Right ventricle myocardium superior (tissue), 1 donor: ENCODE measurements at regions of chr10 and their contacts with region 1.

Region 1: DNA sequence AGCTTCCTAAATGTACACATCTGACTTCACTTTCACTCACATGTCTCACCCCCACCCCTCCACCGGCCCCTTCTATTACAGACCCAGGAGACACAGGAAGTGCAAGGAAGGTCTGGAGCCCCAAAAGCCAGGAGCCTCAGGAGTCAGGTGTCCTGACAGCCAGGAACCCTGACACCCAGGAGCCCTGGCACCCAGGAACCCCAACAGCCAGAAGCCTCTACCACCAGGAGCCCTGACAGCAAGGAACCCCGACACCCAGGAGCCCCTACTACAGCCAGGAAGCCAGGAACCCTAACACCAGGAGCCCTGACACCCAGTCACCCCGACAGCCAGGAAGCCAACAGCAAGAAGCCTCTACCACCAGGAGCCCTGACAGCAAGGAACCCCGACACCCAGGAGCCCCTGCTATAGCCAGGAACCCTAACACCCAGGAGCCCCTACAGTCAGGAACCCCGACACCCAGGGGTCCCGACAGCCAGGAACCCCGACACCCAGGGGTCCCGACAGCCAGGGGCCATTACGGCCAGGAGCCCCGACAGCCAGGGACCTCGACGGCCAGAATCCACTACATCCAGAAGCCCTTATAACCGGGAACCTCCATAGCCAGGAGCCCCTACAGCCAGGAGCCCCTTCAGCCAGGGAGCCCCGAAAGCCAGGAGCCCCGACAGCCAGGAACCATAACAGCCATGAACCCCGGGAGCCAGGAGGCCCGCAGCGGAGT is 526 bp upstream of the GLRX3 start:
- DNase-seq: no peak
- ATAC-seq: peak; percentile 34

Region 2: DNA sequence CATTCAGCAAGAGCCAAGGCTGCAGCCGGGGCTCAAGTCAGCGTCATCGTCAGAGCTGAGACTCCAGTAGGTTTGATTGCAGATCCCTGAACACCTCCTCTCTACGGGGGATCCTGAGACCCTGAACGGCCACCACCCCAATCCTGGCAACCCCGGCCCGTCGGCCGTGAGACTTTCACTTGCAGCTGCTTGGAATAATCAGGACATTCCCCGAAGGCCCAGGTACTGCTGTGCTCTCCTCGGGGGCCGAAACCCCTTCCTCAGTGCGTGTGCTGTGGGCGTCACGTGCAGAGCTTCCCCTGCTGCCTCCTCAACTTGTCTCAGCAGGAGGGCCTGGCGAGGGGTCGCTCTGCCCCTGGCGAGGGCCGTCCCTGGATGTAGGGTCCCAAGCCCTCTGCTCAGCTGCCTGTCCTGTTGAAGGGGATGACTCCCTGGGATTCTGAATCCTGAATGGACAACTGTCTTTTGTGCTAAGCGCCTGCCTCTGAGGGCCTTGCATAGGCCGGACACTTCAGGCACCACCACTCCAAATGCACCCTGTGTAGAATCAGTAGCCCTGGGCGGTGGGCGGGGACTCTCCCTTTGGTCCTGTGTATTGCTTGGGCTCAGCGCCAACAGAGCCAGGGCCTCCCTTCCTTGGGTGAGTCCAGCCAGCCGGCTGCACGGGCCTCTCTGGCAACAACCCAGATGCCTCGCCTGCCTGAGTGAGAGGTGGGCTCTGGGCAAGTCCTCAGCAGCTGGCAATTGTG is 107.8 kb before region 1 on chr10:
- intact Hi-C with region 1: no loop called
- DNase-seq: no peak
- ATAC-seq: no peak

Region 3: DNA sequence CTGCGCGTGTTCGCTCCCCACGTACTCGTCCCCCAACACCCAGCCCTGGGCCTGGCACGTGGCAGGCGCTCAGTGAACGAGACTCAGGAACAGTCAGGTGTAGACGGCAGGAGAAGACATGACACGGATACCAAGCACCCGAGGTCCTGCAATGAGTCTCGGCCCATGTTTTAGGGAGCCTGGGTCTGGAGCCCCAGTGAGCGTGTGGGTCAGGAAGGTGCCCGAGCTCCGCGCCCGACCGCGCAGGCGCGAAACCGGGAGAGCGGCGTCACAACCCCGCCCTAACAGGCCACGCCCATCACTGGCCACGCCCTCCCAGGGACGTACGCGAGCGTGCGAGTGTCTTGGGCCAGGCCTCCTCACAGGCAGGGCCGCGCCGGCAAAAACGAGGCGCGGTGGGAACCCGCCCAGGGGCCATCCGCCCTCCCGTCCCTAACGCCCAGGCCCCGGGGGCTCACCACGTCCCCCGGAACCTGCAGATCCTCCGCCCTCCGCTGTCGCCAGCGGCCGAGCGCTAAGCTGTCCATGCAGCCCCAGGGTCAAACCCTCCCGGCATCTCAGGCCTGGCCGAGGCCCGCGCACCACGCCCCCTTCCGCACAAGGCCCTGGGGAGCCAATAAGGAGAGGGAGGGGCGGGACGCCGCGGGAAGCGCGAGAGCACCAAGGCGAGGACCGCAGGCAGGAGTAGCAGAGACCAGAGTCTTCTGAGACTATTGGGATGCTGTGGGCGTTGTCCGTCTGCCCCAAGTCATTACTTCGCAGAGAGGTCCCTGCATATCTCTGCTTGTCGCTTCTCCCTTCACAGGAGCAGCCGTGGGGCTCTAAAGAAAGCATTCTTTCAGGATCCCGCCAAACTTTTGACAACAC is 25.2 kb before region 1 on chr10 and contains the start of gene C10orf143:
- intact Hi-C with region 1: loop called (anchors 2 kb)
- DNase-seq: peak; percentile 99
- ATAC-seq: peak; percentile 96
- total RNA-seq, gene C10orf143: 2.2 TPM

Region 4: DNA sequence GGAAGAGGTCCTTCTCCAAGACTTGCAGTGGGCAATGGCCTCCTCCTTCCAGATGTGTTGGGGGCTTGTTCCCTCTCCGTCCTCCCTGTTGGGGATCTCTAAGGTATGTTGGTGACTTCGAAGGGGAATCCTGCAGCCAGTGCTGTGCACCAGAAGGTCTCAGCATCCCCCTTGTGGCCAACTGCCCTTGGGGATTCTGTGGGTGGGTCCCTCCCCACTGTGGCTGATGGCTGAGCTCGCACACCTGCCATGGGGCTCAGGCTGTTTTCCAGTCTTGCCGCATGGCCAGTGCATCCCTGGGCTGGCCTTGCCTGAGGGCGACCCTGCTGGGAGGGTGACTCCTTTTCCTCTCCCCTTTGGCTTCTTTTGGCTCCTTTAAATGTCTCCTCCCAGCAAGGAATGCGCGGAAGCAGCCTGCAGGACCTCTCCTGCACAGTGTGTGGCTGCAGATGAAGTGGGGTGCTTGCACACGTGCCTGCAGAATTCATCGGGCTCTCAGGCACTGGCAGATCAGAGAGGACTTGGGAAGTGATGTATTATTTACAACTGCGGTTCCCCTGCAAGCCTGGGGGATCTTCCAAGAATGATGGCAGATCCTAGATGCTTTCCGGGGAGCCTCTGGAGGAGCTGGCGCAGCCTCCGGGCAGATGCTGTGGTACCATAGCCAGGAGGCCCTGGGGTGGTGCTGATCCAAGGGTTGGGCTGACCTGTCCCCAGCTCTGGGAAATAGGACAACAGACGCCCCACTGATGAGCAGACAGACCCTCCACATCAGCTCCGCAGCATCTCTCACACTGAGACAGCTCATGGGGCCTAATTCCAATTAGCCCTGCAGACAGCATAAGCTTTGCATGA is 765.9 kb after region 1 on chr10:
- intact Hi-C with region 1: no loop called
- DNase-seq: no peak
- ATAC-seq: no peak